Naive thymus-derived CD4-positive, alpha-beta T cell (primary cell): ENCODE measurements at regions of chr14 and their contacts with region 1.

Region 1: GRCh38 chr14:99271951-99272631 is at the start of gene BCL11B:
- DNase-seq: peak; percentile 63 to 94 (median 91)
- ATAC-seq: peak; percentile 89
- H3K4me3 ChIP-seq: peak within 1 kb of the TSS; percentile 94
- H3K4me3 Mint-ChIP-seq: peak within 1 kb of the TSS; percentile 92 to 100 (median 98)
- H3K27ac ChIP-seq: peak within 1 kb of the TSS; percentile 98
- H3K27ac Mint-ChIP-seq: peak within 1 kb of the TSS; percentile 91 to 99 (median 98)
- H3K4me1 ChIP-seq: peaks cover 6 to 12% of the 10 kb centered on the region in 2 donors
- H3K4me1 Mint-ChIP-seq: peaks cover 25 to 46% (median 34%) of the 10 kb centered on the region in 7 donors
- H3K27me3 ChIP-seq: no peaks in the 10 kb centered on the region
- H3K27me3 Mint-ChIP-seq: peaks cover 0 to 26% (median 0%) of the 10 kb centered on the region in 5 donors
- total RNA-seq, gene BCL11B: 96.3 to 269 (median 223) TPM

Region 2: DNA sequence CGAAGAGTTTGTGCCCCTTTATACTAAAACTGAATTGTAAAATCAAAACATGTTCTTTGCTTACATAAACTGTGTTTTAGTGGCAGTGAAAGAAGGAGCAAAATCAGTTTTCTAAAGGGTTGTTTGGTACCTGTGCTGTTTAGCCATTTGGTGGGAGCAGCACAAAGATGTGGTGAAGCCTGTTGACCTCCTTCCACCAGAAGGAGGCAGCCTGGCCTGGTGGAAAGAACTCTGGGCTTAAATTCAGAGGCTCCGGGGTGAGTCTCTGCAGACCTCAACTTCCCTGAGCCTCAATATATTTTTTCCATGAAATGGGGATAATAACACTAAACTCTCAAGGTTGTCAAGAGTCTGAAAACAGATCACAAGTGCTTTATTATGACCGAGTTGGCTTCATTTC is 1972.4 kb before region 1 on chr14:
- CTCF ChIA-PET with region 1: interaction called, 3 read pairs
- POLR2A ChIA-PET with region 1: no interaction called
- intact Hi-C with region 1: loop called (anchors 1 kb)
- DNase-seq: peak in 5 of 9 donors; percentile 16 to 31 (median 22)
- ATAC-seq: peak; percentile 54
- H3K4me3 ChIP-seq: no peak overlapping the region
- H3K4me3 Mint-ChIP-seq: no peak overlapping the region
- H3K27ac ChIP-seq: no peak overlapping the region
- H3K27ac Mint-ChIP-seq: peak overlapping the region in 2 of 9 donors; percentile 28 to 48
- H3K4me1 ChIP-seq: peaks cover 0 to 4% of the 10 kb centered on the region in 2 donors
- H3K4me1 Mint-ChIP-seq: peaks cover 4 to 23% (median 12%) of the 10 kb centered on the region in 7 donors
- H3K27me3 ChIP-seq: no peaks in the 10 kb centered on the region
- H3K27me3 Mint-ChIP-seq: peaks cover 0 to 30% (median 0%) of the 10 kb centered on the region in 5 donors

Region 3: DNA sequence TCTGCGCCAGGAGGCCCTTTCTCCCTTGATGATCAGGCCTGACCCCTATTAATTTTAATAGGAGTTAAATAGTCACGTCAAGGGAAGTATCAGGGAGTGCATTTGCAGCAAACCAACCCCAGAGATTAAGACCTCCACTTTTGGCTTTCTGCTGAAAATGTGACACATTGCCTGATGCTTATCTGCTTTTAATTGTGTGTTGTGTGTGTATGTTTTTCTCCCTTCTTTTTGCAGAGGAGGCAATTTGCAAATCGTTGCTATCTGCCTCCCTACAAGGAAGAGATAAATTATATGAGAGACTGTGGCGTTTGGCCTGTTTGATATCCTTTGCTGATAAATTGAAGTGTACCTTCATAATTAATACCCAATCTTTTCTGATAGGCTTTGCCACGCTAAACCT is 1652.0 kb before region 1 on chr14:
- CTCF ChIA-PET with region 1: no interaction called
- POLR2A ChIA-PET with region 1: interaction called, 4 read pairs
- intact Hi-C with region 1: loop called (anchors 1 to 5 kb)
- DNase-seq: peak in 1 of 9 donors; percentile 15
- ATAC-seq: no peak
- H3K4me3 ChIP-seq: peak overlapping the region; percentile 4
- H3K4me3 Mint-ChIP-seq: peak overlapping the region; percentile 72 to 95 (median 85)
- H3K27ac ChIP-seq: peak overlapping the region; percentile 76
- H3K27ac Mint-ChIP-seq: peak overlapping the region; percentile 95 to 100 (median 98)
- H3K4me1 ChIP-seq: peaks cover 37 to 38% of the 10 kb centered on the region in 2 donors
- H3K4me1 Mint-ChIP-seq: peaks cover 33 to 74% (median 58%) of the 10 kb centered on the region in 7 donors
- H3K27me3 ChIP-seq: no peaks in the 10 kb centered on the region
- H3K27me3 Mint-ChIP-seq: no peaks in the 10 kb centered on the region

Region 4: DNA sequence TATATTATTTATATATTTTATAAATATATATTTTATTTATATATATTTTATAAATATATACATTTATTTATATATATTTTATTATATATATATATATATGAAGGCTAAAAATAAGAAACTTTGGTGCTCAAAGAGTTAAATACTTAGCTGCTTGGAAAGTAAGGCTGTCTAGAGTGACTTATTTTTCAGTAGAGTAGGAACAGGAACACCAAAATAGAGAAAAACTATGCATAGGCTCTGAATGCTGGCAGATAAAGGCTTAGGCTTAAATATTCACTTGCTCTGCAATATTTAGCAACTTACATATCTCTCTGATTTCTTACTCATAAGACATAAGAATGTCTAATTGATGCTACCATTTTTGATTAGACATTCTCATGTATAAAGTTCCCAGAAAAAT is 1483.7 kb before region 1 on chr14:
- CTCF ChIA-PET with region 1: no interaction called
- POLR2A ChIA-PET with region 1: no interaction called
- intact Hi-C with region 1: loop called in 1 of 2 experiments (anchors 5 kb)
- DNase-seq: no peak
- ATAC-seq: no peak
- H3K4me3 ChIP-seq: no peak overlapping the region
- H3K4me3 Mint-ChIP-seq: no peak overlapping the region
- H3K27ac ChIP-seq: no peak overlapping the region
- H3K27ac Mint-ChIP-seq: peak overlapping the region in 2 of 9 donors; percentile 16 to 21
- H3K4me1 ChIP-seq: peaks cover 0 to 13% of the 10 kb centered on the region in 2 donors
- H3K4me1 Mint-ChIP-seq: peaks cover 8 to 38% (median 34%) of the 10 kb centered on the region in 7 donors
- H3K27me3 ChIP-seq: no peaks in the 10 kb centered on the region
- H3K27me3 Mint-ChIP-seq: no peaks in the 10 kb centered on the region

Region 5: DNA sequence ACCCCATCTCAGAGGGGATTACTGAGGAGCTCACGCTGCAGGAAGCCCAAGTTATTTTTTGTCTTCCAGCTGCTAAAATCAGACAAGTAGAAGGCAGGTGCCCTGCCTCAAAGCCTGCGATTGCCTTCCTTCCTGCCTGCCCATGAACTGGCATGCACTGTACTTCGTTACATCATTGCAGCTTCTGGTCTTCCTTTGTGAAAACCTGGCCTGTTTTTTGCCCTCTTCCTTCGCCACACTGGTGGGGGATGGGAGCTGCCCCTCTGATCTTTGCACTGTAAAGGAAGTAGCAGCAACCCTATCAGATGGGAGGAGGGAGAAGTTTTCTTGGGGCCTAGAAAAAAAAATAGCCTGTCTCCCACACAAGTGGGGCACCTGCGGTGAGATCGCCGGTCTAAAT is 1098.8 kb before region 1 on chr14:
- CTCF ChIA-PET with region 1: no interaction called
- POLR2A ChIA-PET with region 1: interaction called, 11 read pairs
- intact Hi-C with region 1: no loop called
- DNase-seq: peak in 7 of 9 donors; percentile 71 to 84 (median 82)
- ATAC-seq: peak; percentile 78
- H3K4me3 ChIP-seq: peak overlapping the region; percentile 33
- H3K4me3 Mint-ChIP-seq: peak overlapping the region; percentile 74 to 90 (median 84)
- H3K27ac ChIP-seq: peak overlapping the region; percentile 81
- H3K27ac Mint-ChIP-seq: peak overlapping the region; percentile 89 to 100 (median 97)
- H3K4me1 ChIP-seq: peaks cover 100% of the 10 kb centered on the region in 2 donors
- H3K4me1 Mint-ChIP-seq: peaks cover 59 to 100% (median 99%) of the 10 kb centered on the region in 7 donors
- H3K27me3 ChIP-seq: no peaks in the 10 kb centered on the region
- H3K27me3 Mint-ChIP-seq: no peaks in the 10 kb centered on the region

Region 6: DNA sequence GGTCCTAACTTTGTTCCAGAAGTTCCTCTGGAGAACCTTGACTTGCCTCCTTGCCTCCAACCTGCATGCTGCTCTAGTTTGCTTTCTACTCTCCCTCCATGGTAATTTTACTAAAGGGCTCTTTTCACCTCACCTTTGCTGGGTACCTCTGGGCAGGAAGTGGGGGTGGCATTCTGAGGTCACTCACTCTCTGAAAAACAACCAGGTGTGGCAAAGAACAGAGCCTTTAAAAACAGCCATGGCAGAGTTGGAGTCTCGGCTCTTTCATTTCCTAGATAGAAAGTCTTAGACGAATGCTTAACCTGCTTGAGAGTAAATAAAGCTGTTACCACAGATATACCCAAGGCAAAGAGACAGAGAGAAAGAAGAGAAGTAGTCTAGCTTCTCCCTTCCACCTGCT is 828.0 kb before region 1 on chr14:
- CTCF ChIA-PET with region 1: no interaction called
- POLR2A ChIA-PET with region 1: interaction called, 6 read pairs
- intact Hi-C with region 1: loop called in 1 of 2 experiments (anchors 2 kb)
- DNase-seq: peak in 7 of 9 donors; percentile 61 to 90 (median 86)
- ATAC-seq: peak; percentile 97
- H3K4me3 ChIP-seq: peak overlapping the region; percentile 26
- H3K4me3 Mint-ChIP-seq: peak overlapping the region; percentile 15 to 93 (median 81)
- H3K27ac ChIP-seq: peak overlapping the region; percentile 63
- H3K27ac Mint-ChIP-seq: peak overlapping the region in 6 of 9 donors; percentile 70 to 100 (median 100)
- H3K4me1 ChIP-seq: peaks cover 17 to 43% of the 10 kb centered on the region in 2 donors
- H3K4me1 Mint-ChIP-seq: peaks cover 0 to 54% (median 32%) of the 10 kb centered on the region in 7 donors
- H3K27me3 ChIP-seq: no peaks in the 10 kb centered on the region
- H3K27me3 Mint-ChIP-seq: no peaks in the 10 kb centered on the region

Region 7: DNA sequence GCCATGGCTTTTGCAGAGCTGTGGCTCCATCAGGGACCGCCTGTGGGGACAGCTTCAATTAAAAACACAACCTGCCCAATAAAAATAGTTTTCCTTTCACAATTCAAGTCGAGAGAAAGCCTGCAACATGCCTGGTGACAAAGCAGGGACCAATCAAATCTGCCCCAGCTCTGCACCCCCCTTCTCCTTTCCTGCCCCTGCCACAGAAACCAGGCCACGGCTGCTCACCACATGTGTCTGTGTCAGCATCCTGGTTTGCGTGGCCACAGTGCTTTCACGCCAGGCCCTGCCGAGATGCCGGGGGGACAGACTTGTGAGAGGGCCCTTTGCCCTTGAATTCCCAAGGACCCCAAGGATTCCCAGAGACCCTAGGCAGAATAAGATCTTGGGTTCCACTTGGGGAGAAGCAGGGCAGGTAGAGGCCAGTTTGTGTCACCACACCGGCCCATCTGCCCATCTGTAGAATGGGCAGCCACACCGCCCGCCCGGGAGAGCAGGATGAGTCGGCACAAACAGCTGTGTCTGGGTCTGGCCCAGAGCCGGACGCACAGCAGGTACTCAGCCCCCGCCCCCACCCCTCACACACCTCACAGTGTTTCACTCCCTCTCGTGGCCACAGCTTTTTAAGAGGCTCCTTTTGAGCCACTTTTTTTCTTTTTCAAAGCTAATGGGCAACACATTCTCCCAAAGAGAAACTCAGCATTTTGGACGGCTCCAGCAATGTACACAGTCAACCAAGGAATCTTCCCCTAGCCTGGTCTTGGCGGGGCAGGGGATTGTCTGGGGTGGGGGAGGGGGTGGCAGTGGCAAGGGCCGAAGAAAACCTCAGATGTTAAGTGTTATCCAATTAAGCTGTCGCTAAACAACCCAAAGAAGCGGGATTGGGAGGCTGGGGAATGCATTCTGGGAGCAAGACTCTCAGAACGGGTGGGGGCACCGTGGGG is 41.6 kb before region 1 on chr14:
- CTCF ChIA-PET with region 1: interaction called, 6 read pairs
- POLR2A ChIA-PET with region 1: interaction called, 1,374 read pairs
- intact Hi-C with region 1: no loop called
- DNase-seq: peak; percentile 54 to 91 (median 84)
- ATAC-seq: peak; percentile 82
- H3K4me3 ChIP-seq: peak overlapping the region; percentile 27
- H3K4me3 Mint-ChIP-seq: peak overlapping the region; percentile 79 to 94 (median 86)
- H3K27ac ChIP-seq: peak overlapping the region; percentile 98
- H3K27ac Mint-ChIP-seq: peak overlapping the region; percentile 94 to 100 (median 99)
- H3K4me1 ChIP-seq: peaks cover 94 to 96% of the 10 kb centered on the region in 2 donors
- H3K4me1 Mint-ChIP-seq: peaks cover 65 to 96% (median 92%) of the 10 kb centered on the region in 7 donors
- H3K27me3 ChIP-seq: no peaks in the 10 kb centered on the region
- H3K27me3 Mint-ChIP-seq: no peaks in the 10 kb centered on the region